ENCODE measurements at regions of chr2 and their contacts with region 1.

Region 1: DNA sequence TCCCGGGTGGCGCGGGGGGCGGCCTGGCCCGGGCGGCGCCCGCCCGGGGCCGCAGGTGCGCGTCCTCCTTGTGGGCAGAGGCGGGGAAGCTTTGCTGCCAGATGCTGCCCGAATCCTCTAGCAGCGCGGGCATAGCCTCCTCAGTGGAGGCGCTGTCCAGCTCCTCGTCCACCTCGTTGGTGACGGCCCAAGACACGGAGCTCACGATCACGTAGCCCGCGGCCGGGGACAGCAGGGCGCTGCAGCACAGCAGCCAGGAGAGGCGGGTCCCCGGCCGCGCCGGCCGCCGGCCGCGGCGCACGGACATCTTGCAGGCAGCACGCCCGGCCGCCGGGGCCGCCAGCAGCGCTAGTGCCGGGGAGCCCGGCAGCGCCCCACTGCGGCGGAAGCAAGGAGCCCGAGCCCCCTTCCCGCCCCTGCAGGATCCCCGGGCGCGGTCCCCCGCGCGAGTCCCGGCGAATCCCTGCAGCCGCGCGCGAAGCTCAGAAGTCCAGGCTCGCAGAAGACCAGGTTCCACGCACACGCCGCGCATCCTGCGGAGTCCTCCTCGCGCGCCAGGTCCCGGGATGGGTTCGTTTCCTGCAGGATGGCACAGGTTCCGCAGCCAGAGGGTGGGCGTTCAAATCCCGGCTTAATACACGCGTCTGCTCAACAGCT is at the start of gene CREG2:
- DNase-seq: peak; percentile 69
- ATAC-seq: peak; percentile 96
- H3K4me3 Mint-ChIP-seq: peak within 1 kb of the TSS; percentile 56
- H3K27ac Mint-ChIP-seq: no peak within 1 kb of the TSS
- H3K4me1 Mint-ChIP-seq: peaks cover 5% of the 10 kb centered on the region
- H3K27me3 Mint-ChIP-seq: peaks cover 36% of the 10 kb centered on the region
- CTCF ChIP-seq: peak; percentile 78
- total RNA-seq, gene CREG2: not detected

Region 2: GRCh38 chr2:101230541-101230993 is 156.7 kb before region 1 on chr2:
- CTCF ChIA-PET with region 1: no interaction called
- POLR2A ChIA-PET with region 1: no interaction called
- intact Hi-C with region 1: no loop called
- DNase-seq: no peak
- ATAC-seq: no peak
- H3K4me3 Mint-ChIP-seq: no peak overlapping the region
- H3K27ac Mint-ChIP-seq: no peak overlapping the region
- H3K4me1 Mint-ChIP-seq: no peaks in the 10 kb centered on the region
- H3K27me3 Mint-ChIP-seq: no peaks in the 10 kb centered on the region
- CTCF ChIP-seq: no peak

Region 3: GRCh38 chr2:101349893-101350662 is 37.2 kb before region 1 on chr2:
- CTCF ChIA-PET with region 1: interaction called, 18 read pairs
- POLR2A ChIA-PET with region 1: no interaction called
- intact Hi-C with region 1: no loop called
- DNase-seq: no peak
- ATAC-seq: no peak
- H3K4me3 Mint-ChIP-seq: no peak overlapping the region
- H3K27ac Mint-ChIP-seq: no peak overlapping the region
- H3K4me1 Mint-ChIP-seq: peaks cover 3% of the 10 kb centered on the region
- H3K27me3 Mint-ChIP-seq: no peaks in the 10 kb centered on the region
- CTCF ChIP-seq: no peak

Region 4: GRCh38 chr2:101400048-101400447 is 12.8 kb after region 1 on chr2:
- CTCF ChIA-PET with region 1: interaction called, 12 read pairs
- POLR2A ChIA-PET with region 1: interaction called, 3 read pairs
- intact Hi-C with region 1: no loop called
- DNase-seq: no peak
- ATAC-seq: no peak
- H3K4me3 Mint-ChIP-seq: no peak overlapping the region
- H3K27ac Mint-ChIP-seq: no peak overlapping the region
- H3K4me1 Mint-ChIP-seq: no peaks in the 10 kb centered on the region
- H3K27me3 Mint-ChIP-seq: peaks cover 21% of the 10 kb centered on the region
- CTCF ChIP-seq: no peak

Region 5: GRCh38 chr2:101435001-101435862 is 48.0 kb after region 1 on chr2:
- CTCF ChIA-PET with region 1: no interaction called
- POLR2A ChIA-PET with region 1: no interaction called
- intact Hi-C with region 1: no loop called
- DNase-seq: no peak
- ATAC-seq: no peak
- H3K4me3 Mint-ChIP-seq: no peak overlapping the region
- H3K27ac Mint-ChIP-seq: no peak overlapping the region
- H3K4me1 Mint-ChIP-seq: no peaks in the 10 kb centered on the region
- H3K27me3 Mint-ChIP-seq: no peaks in the 10 kb centered on the region
- CTCF ChIP-seq: no peak